Left colon (tissue), 2 donors: ENCODE measurements at regions of chr17 and their contacts with region 1.

Region 1: GRCh38 chr17:74176546-74177001 is 26.9 kb upstream of the RPL38 start:
- DNase-seq: peak in 1 of 2 donors; percentile 64
- ATAC-seq: peak; percentile 92

Region 2: GRCh38 chr17:73657473-73658116 is 519.0 kb before region 1 on chr17:
- intact Hi-C with region 1: loop called in 1 of 2 experiments (anchors 10 kb)
- DNase-seq: peak; percentile 65 to 81
- ATAC-seq: peak; percentile 81

Region 3: DNA sequence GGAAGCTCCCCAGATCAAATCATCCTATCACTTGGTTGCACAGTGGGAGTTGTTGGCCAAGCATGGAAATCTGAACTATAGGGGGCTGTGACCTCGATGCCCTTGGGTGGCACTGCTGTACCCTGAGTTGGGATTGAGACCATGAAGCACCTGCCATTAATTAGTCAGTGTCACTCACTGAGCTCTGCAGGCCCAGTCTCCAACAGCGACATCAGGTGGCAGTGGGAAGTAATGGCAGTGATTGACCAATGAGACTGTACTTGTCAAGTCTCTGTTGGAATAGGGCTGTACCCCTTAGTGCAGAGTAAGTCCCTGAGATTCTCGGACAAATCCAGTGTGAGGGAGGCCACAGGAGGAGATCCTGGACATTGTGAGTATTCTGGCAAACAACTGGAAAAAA is 91.1 kb before region 1 on chr17:
- intact Hi-C with region 1: no loop called
- DNase-seq: no peak
- ATAC-seq: no peak

Region 4: DNA sequence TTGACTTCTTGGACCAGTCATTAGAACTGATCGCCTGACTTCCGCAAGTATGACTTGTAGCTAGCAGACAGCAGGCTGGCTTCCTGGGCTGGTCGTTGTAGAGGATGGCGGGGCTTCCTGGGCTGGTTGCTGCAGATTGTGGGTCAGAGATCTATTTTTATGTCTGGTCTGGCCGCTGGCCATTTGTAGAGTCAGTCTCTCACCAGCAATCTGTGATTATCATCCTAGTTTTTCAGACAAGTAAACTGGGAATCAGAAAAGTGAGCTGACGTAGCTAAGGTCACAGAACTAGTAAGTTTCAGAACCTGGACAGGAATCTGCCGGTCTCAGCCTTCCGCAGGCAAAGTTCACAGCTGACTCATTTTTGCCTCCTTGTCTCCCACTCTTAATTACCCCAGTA is 209.8 kb after region 1 on chr17:
- intact Hi-C with region 1: no loop called
- DNase-seq: no peak
- ATAC-seq: peak; percentile 48